Activated naive CD4-positive, alpha-beta T cell treated with anti-CD3 and anti-CD28 coated beads for 36 hours (primary cell): ENCODE measurements at regions of chr18 and their contacts with region 1.

Region 1: DNA sequence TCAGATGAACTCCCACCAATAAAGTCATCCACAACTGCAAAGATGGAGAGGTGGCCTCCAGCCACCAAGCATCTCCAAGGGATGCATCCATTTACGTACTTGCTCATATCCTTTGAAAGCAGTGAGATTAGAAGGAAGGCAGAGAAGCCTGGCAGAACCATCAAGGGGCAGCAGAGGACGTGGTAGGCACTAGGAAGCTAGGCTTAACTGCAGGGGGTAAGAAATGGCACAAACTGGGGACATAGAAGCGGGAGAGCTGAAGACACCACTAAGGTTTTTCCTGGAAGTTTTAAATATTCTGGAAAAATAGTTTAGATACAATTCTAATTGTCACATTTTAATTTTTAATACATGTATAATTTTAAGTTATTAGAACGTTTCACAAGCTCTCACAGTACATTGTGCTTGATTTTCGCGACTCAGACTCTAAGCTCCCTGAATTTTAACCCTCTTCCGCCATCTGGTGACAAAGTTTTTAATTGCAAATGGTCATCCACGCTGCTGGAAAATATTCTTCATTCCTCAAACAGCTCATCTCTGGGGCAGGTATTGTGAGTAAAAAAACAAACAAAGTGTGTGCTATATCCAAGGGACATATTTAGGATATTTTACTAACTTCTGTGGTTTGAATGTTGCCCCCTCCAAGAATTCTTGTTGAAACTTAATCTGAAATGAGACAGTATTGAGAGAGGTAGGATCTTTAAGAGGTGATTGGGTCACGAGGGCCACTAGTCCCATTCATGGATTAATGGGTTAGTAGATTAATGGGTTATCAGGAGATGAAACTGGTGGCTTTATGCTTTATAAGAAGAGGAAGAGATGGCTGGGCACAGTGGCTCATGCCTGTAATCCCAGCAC is 1.6 kb upstream of the PSTPIP2 start:
- DNase-seq: peak; percentile 75
- H3K4me3 Mint-ChIP-seq: no peak overlapping the region
- H3K27ac Mint-ChIP-seq: no peak overlapping the region
- H3K4me1 Mint-ChIP-seq: peaks cover 40% of the 10 kb centered on the region
- H3K27me3 Mint-ChIP-seq: no peaks in the 10 kb centered on the region

Region 2: DNA sequence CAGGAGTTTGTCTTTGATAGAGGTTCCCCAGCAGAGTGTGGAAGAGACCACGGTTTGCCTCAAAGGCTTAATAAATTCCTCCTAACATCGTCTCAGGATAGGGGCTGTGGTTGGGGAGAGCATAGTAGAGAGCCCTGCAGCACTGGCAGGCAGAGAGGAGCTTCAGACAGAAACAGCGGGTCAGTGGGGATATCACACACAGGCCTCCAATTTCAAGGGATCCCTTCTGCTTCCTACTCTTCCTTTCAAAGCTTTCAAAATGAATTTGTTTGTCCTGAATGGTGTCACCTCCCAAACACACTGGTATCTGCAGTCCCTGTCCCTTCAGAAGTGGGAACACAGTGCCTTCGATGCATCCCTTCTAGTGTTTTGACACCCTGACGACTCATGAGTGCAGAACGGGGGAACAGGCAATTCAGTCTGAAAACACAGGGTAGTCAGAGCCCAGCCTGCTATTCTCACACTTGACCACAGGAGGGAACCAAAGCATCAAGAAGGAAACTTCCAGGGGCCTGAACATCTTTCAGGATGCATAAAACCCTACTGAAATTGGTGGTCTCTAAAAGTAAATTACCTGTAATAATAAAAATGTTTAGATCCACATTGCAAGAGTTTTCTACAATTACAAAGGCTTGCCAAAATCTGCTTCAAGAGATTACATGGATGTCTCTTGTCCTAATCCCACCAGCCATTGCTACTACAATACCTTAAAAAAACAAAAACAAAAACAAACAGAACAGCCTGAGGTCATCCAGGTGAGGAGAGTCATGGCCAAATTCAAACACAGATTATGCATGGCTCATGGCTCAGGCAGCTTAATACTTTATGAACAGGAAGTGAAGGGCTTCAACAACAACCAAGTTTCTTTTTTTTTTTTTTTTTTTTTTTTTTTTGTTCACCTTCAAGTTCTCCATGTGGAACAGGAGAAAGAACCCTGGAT is 408.6 kb before region 1 on chr18:
- CTCF ChIA-PET with region 1: interaction called, 26 read pairs
- intact Hi-C with region 1: loop called (anchors 1 kb)
- DNase-seq: peak; percentile 82
- H3K4me3 Mint-ChIP-seq: no peak overlapping the region
- H3K27ac Mint-ChIP-seq: no peak overlapping the region
- H3K4me1 Mint-ChIP-seq: peaks cover 52% of the 10 kb centered on the region
- H3K27me3 Mint-ChIP-seq: no peaks in the 10 kb centered on the region

Region 3: GRCh38 chr18:45722899-45723298 is 350.8 kb before region 1 on chr18:
- CTCF ChIA-PET with region 1: interaction called, 5 read pairs
- intact Hi-C with region 1: loop called (anchors 1 kb)
- DNase-seq: peak; percentile 87
- H3K4me3 Mint-ChIP-seq: no peak overlapping the region
- H3K27ac Mint-ChIP-seq: no peak overlapping the region
- H3K4me1 Mint-ChIP-seq: no peaks in the 10 kb centered on the region
- H3K27me3 Mint-ChIP-seq: peaks cover 5% of the 10 kb centered on the region

Region 4: GRCh38 chr18:45879681-45880655 is 193.7 kb before region 1 on chr18:
- CTCF ChIA-PET with region 1: interaction called, 21 read pairs
- intact Hi-C with region 1: loop called (anchors 1 kb)
- DNase-seq: peak; percentile 78
- H3K4me3 Mint-ChIP-seq: no peak overlapping the region
- H3K27ac Mint-ChIP-seq: no peak overlapping the region
- H3K4me1 Mint-ChIP-seq: peaks cover 15% of the 10 kb centered on the region
- H3K27me3 Mint-ChIP-seq: no peaks in the 10 kb centered on the region

Region 5: DNA sequence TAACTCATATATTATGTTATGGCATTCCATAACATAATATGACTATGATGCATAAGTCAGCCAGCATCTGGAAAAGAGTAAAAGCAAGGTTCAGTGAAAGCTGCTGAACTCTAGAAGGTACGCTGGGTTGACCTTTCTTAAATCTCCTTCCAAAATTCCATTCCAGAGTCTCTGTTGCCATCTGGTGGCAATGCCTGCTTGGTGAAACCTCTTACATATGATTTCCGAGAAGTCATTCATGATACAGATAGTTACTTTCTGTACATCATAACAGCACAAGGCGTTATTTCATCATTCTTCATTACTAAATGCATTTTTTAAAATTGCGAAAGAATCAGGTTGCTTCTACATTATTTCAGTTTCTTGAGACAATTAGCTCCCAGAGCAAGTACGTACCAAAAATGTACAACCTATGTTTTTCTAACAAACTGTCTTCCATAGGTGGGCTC is 99.6 kb before region 1 on chr18:
- CTCF ChIA-PET with region 1: interaction called, 53 read pairs
- intact Hi-C with region 1: loop called (anchors 1 kb)
- DNase-seq: peak; percentile 91
- H3K4me3 Mint-ChIP-seq: no peak overlapping the region
- H3K27ac Mint-ChIP-seq: peak overlapping the region; percentile 78
- H3K4me1 Mint-ChIP-seq: peaks cover 14% of the 10 kb centered on the region
- H3K27me3 Mint-ChIP-seq: no peaks in the 10 kb centered on the region

Region 6: DNA sequence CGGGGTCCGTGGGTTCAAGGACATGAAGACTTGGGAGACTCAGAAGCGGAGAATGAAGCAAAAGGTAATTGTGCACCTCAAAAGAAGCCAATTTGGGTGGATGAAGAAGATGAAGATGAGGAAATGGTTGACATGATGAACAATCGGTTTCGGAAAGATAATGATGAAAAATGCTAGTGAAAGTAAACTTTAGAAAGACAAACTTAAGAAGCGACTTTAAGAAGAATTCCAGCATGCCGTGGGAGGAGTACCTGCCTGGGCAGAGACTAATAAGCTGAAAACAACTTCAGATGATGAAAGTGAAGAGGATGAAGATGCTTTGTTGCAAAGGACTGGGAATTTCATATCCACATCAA is 45.2 kb before region 1 on chr18:
- CTCF ChIA-PET with region 1: interaction called, 7 read pairs
- intact Hi-C with region 1: loop called (anchors 1 kb)
- DNase-seq: no peak
- H3K4me3 Mint-ChIP-seq: peak overlapping the region; percentile 81
- H3K27ac Mint-ChIP-seq: peak overlapping the region; percentile 78
- H3K4me1 Mint-ChIP-seq: peaks cover 14% of the 10 kb centered on the region
- H3K27me3 Mint-ChIP-seq: peaks cover 6% of the 10 kb centered on the region